ENCODE measurements at regions of chr15 and their contacts with region 1.

Region 1: GRCh38 chr15:63466378-63467192 is 37.8 kb upstream of the USP3 start:
- DNase-seq: peak; percentile 30
- H3K4me3 ChIP-seq: no peak overlapping the region
- H3K27ac ChIP-seq: no peak overlapping the region
- H3K27me3 ChIP-seq: no peaks in the 10 kb centered on the region
- CTCF ChIP-seq: peak; percentile 67

Region 2: GRCh38 chr15:63420333-63420747 is 46.2 kb before region 1 on chr15:
- CTCF ChIA-PET with region 1: no interaction called
- POLR2A ChIA-PET with region 1: no interaction called
- DNase-seq: no peak
- H3K4me3 ChIP-seq: no peak overlapping the region
- H3K27ac ChIP-seq: no peak overlapping the region
- H3K27me3 ChIP-seq: no peaks in the 10 kb centered on the region
- CTCF ChIP-seq: no peak

Region 3: GRCh38 chr15:63509955-63510940 is 43.7 kb after region 1 on chr15:
- CTCF ChIA-PET with region 1: interaction called, 13 read pairs
- POLR2A ChIA-PET with region 1: interaction called, 5 read pairs
- DNase-seq: no peak
- H3K4me3 ChIP-seq: no peak overlapping the region; the same call in 1 of the 2 replicates
- H3K27ac ChIP-seq: no peak overlapping the region
- H3K27me3 ChIP-seq: no peaks in the 10 kb centered on the region
- CTCF ChIP-seq: no peak

Measured in AG04450 (cell line).